PC-9 (cell line): ENCODE measurements at regions of chr15 and their contacts with region 1.

Region 1: GRCh38 chr15:92930776-92931175 is 30.7 kb downstream of the CHD2 start:
- DNase-seq: peak; percentile 25 to 65
- H3K4me3 ChIP-seq: no peak overlapping the region
- H3K27ac ChIP-seq: peak overlapping the region; percentile 8; the same call in 1 of the 2 replicates
- H3K4me1 ChIP-seq: no peaks in the 10 kb centered on the region; the same call in 1 of the 2 replicates
- H3K27me3 ChIP-seq: no peaks in the 10 kb centered on the region
- CTCF ChIP-seq: no peak

Region 2: GRCh38 chr15:92958105-92958504 is 27.3 kb after region 1 on chr15:
- CTCF ChIA-PET with region 1: interaction called, 15 read pairs
- POLR2A ChIA-PET with region 1: no interaction called
- intact Hi-C with region 1: no loop called
- DNase-seq: no peak
- H3K4me3 ChIP-seq: no peak overlapping the region
- H3K27ac ChIP-seq: no peak overlapping the region
- H3K4me1 ChIP-seq: no peaks in the 10 kb centered on the region
- H3K27me3 ChIP-seq: no peaks in the 10 kb centered on the region
- CTCF ChIP-seq: no peak

Region 3: GRCh38 chr15:92992720-92993119 is 61.9 kb after region 1 on chr15:
- CTCF ChIA-PET with region 1: no interaction called
- POLR2A ChIA-PET with region 1: no interaction called
- intact Hi-C with region 1: loop called (anchors 10 kb)
- DNase-seq: no peak
- H3K4me3 ChIP-seq: no peak overlapping the region
- H3K27ac ChIP-seq: no peak overlapping the region
- H3K4me1 ChIP-seq: no peaks in the 10 kb centered on the region
- H3K27me3 ChIP-seq: no peaks in the 10 kb centered on the region
- CTCF ChIP-seq: no peak